Activated naive CD4-positive, alpha-beta T cell treated with anti-CD3 and anti-CD28 coated beads, Interleukin-2, amount 10 ng/mL, durations not matched to agents 7 days and 5 days (primary cell): ENCODE measurements at regions of chr11 and their contacts with region 1.

Region 1: GRCh38 chr11:128290106-128290840 is 297.1 kb downstream of the ETS1 start:
- DNase-seq: peak; percentile 82
- H3K4me3 Mint-ChIP-seq: peak overlapping the region; percentile 85
- H3K27ac Mint-ChIP-seq: peak overlapping the region; percentile 96
- H3K4me1 Mint-ChIP-seq: peaks cover 92% of the 10 kb centered on the region
- H3K27me3 Mint-ChIP-seq: no peaks in the 10 kb centered on the region

Region 2: DNA sequence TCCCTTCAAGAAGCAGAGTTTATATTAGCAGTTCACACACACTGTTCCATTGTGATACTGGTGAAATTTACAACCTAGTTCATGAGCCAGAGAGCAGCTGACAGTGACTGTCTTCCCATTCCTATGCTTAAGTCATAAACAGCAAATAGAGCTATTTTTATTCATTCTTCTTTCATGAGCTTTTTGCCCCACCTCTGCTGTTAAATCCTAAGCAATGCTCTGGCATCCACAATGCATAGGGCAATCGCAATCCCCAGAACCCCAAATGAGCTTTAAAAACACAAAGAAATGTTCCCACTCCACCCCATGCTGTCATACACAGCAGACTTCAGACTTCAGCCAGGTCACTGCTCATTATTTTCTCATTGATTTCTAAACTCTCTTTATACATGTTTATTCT is 10.4 kb before region 1 on chr11:
- CTCF ChIA-PET with region 1: no interaction called
- DNase-seq: no peak
- H3K4me3 Mint-ChIP-seq: no peak overlapping the region
- H3K27ac Mint-ChIP-seq: no peak overlapping the region
- H3K4me1 Mint-ChIP-seq: peaks cover 5% of the 10 kb centered on the region
- H3K27me3 Mint-ChIP-seq: peaks cover 17% of the 10 kb centered on the region

Region 3: GRCh38 chr11:128302425-128303186 is 12.3 kb after region 1 on chr11:
- CTCF ChIA-PET with region 1: interaction called, 33 read pairs
- DNase-seq: peak; percentile 84
- H3K4me3 Mint-ChIP-seq: peak overlapping the region; percentile 87
- H3K27ac Mint-ChIP-seq: peak overlapping the region; percentile 99
- H3K4me1 Mint-ChIP-seq: peaks cover 89% of the 10 kb centered on the region
- H3K27me3 Mint-ChIP-seq: no peaks in the 10 kb centered on the region

Region 4: DNA sequence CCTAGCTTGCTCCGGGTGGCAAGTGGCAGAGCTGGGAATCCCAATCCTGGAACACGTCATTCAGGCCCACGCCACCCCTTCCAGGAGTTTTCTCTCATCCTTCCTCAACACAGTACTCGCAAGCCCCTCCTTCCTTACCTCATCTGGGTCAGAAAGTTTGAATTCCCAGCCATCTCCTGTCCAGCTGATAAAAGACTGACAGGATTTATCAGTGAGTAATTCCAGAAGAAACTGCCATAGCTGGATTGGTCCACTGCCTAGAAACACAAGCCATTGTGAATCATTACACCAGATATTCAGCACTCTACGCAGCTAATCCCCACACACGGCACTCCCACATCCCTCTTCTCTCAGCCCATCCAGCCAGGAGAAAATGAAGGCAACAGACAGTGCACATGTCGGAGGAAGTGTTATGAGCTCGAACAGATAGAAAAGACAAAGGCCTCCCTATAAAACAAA is 173.1 kb after region 1 on chr11:
- CTCF ChIA-PET with region 1: interaction called, 13 read pairs
- DNase-seq: no peak
- H3K4me3 Mint-ChIP-seq: peak overlapping the region; percentile 36
- H3K27ac Mint-ChIP-seq: peak overlapping the region; percentile 92
- H3K4me1 Mint-ChIP-seq: peaks cover 93% of the 10 kb centered on the region
- H3K27me3 Mint-ChIP-seq: no peaks in the 10 kb centered on the region

Region 5: GRCh38 chr11:128520206-128520887 is 230.1 kb after region 1 on chr11:
- CTCF ChIA-PET with region 1: interaction called, 15 read pairs
- DNase-seq: peak; percentile 49
- H3K4me3 Mint-ChIP-seq: peak overlapping the region; percentile 96
- H3K27ac Mint-ChIP-seq: peak overlapping the region; percentile 100
- H3K4me1 Mint-ChIP-seq: peaks cover 41% of the 10 kb centered on the region
- H3K27me3 Mint-ChIP-seq: no peaks in the 10 kb centered on the region